Calu3 (cell line): ENCODE measurements at regions of chr14 and their contacts with region 1.

Region 1: GRCh38 chr14:67704484-67705089 is 2.9 kb downstream of the RDH12 start:
- DNase-seq: peak; percentile 62
- H3K4me3 Mint-ChIP-seq: peak overlapping the region; percentile 49
- H3K27ac Mint-ChIP-seq: peak overlapping the region; percentile 78
- H3K4me1 Mint-ChIP-seq: peaks cover 16% of the 10 kb centered on the region
- H3K27me3 Mint-ChIP-seq: no peaks in the 10 kb centered on the region
- CTCF ChIP-seq: peak; percentile 50

Region 2: DNA sequence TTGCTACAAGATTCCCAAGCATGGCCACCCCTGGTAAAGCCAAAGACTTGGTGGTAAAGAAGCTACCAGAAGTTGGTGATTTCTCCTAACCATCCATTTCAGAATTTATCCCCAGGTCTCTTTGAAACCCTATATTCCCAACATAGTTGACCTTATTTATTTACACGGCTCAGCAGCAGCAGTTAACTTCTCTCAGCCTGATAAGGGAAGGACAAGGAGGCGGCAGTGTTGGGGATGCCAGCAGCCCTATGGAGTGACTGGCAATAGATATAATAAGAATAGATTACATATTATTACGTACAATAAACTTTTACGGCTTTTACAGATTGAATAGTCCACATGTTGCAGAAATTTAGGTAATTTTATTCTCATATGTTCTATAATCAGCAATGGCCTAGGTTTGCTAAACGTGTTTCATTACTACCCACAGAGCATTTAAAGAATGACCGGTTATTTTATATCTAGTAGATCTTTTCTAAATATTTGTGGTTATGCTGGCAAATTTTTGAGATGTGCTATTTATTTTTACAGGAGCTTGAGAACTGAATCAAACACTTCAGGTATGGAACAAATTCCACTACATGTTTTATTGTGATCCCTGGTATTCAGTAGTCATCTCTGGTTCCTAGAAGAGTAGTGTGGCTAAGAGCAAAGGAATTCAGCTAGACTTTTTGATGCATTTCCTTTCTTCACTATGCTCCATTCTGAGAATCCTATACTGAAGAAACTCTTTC is 483.2 kb before region 1 on chr14:
- CTCF ChIA-PET with region 1: no interaction called
- intact Hi-C with region 1: no loop called
- DNase-seq: no peak
- H3K4me3 Mint-ChIP-seq: no peak overlapping the region
- H3K27ac Mint-ChIP-seq: no peak overlapping the region
- H3K4me1 Mint-ChIP-seq: peaks cover 12% of the 10 kb centered on the region
- H3K27me3 Mint-ChIP-seq: no peaks in the 10 kb centered on the region
- CTCF ChIP-seq: no peak

Region 3: DNA sequence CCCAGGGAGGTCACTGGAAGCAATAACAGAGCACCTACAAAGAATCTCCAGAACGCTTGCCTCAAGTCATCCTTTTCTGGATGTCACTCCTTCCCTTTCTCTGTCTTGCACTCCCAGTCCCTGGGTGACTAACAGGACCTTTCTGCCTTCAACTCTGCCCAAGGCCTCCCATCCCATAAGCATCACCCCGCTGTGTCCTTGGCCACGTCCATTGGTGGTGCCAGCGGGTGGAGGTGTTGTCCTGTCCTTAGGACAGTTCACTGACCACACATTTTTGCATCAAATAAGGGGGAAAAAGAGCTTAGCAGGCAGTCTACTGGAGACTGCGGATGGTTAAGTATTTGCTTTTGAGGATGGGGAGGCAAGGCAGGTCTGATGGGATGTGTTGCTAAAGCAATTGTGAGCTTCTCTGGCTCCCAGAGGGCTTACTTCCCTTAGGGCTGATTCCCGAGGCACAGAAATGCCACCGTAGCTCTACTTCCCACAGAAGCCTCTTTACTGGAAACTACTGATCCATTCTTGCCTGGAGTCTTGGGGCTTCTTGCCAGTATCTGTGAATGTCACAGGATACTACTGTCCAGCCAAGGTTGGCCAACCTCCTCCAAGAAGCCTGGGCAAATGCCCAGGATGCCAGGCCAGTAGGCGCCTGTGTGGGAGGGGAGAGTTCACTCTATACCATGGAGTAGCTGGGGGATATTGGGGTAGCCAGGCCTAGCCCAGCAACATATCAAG is 268.8 kb before region 1 on chr14:
- CTCF ChIA-PET with region 1: no interaction called
- intact Hi-C with region 1: loop called (anchors 10 kb)
- DNase-seq: no peak
- H3K4me3 Mint-ChIP-seq: no peak overlapping the region
- H3K27ac Mint-ChIP-seq: no peak overlapping the region
- H3K4me1 Mint-ChIP-seq: peaks cover 16% of the 10 kb centered on the region
- H3K27me3 Mint-ChIP-seq: peaks cover 53% of the 10 kb centered on the region
- CTCF ChIP-seq: no peak

Region 4: DNA sequence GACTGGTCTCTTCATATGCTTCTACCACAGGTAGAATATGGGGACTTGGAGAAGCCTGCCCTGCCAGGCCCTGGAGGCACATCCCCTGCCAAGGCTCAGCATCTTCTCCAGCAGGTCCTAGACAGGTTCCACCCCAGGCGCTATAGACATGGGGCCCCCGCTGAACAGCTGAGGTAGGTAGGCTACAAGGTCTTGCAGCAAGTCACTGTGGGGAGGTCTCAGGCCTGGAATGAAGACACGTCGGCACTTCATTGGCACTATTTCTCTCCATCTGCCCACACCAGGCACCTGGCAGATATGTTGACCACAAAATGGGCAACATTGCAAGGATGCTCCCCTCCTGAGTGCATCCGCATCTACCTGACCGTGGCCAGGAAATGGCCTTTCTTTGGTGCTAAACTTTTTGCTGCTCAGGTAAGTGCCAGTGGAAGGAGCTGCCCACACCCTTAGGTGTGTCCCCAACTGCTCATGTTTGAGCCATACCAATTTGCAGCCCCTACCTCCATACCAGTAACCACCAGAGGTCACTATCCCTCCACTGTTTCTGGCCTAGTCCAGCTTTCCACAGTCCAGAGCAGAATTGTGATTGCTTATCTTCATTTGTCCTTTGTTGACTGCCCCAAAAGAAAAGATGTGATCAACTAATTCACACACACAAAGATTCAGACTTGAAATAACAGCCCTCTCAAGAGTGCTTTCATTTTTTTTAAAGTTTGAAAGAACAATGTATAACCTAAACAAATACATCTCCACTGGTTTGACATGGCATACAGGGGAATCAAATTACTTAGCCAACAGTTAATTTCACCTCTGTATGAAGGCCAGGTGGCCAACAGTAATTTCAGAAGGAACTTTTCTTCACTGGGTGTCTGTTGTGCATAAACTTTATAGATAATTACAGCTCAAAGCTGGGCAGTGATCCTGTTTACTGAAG is 120.6 kb before region 1 on chr14:
- CTCF ChIA-PET with region 1: interaction called, 31 read pairs
- intact Hi-C with region 1: loop called (anchors 1 kb)
- DNase-seq: peak; percentile 70
- H3K4me3 Mint-ChIP-seq: no peak overlapping the region
- H3K27ac Mint-ChIP-seq: no peak overlapping the region
- H3K4me1 Mint-ChIP-seq: no peaks in the 10 kb centered on the region
- H3K27me3 Mint-ChIP-seq: no peaks in the 10 kb centered on the region
- CTCF ChIP-seq: peak; percentile 45

Region 5: DNA sequence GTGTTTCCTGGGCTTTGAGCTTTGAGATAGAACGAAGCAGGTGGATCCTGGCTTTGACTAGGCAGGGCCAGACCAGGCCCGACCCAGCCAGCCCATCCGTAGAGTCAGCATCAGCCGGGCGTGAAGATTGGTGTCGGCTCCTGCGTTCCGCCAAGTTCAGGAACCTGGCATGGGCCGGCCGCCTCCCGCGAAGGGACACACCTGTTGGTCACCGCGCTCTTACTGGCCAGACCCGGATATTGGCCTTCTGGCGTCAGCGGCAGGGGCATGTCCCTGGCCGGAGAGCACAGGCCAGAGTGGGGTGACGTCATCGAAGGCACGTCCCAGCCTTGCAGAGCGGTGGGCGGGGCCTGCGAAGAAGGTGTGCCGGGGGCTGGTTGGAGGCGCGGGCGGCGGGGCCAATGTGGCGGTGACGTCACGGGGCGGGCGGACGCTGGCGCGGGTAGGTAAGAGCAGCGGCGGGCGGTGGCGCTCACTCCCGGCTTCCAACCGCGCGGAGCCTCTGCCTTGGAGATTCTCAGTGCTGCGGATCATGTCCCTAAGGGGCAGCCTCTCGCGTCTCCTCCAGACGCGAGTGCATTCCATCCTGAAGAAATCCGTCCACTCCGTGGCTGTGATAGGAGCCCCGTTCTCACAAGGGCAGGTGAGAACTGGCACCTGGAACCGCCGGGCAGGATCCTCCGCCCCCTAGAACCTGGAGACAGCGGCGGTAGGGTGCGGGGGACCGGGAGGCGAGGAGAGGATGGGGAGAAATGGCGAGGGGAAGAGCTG is 85.0 kb before region 1 on chr14 and contains the start of gene ARG2:
- CTCF ChIA-PET with region 1: interaction called, 23 read pairs
- intact Hi-C with region 1: loop called (anchors 2 kb)
- DNase-seq: peak; percentile 99
- H3K4me3 Mint-ChIP-seq: peak within 1 kb of the TSS; percentile 97
- H3K27ac Mint-ChIP-seq: peak within 1 kb of the TSS; percentile 94
- H3K4me1 Mint-ChIP-seq: peaks cover 21% of the 10 kb centered on the region
- H3K27me3 Mint-ChIP-seq: peaks cover 18% of the 10 kb centered on the region
- CTCF ChIP-seq: no peak
- total RNA-seq, gene ARG2: 11.2 and 18.4 TPM in 2 replicates

Region 6: DNA sequence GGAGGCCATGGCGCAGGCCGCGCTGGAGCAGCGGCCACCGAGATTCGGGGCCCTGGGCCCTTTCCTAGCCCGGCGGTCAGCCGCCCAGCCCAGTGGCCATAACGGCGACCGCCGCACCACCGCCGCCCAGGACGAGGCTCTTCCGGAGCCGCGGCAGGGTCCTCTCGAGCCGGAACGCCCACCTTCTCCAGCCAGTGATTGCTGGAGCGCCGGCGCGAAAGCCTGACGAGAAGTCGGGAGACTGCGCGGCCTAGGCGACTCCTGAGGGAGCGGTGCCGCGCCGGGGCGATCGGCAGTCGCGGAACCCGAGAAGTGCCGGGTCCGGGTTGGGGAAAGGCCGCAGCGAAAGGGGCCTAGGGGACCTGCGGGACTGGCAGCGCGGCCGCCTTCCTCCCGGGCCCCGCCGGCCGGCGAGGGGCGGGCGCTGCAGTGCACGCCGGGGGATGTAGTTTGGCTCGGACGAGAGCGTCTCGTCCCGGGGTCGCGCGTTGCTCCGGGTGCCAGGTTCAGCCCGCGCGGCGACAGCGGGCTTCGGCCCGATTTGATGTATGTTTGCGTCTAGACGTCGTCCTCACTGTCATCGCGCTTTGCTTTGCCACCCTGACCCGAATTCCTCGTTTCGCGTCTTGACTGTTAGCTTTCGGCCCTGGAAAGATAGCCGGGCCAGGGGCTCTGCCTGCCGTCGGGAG is 30.0 kb before region 1 on chr14 and contains the start of gene VTI1B:
- CTCF ChIA-PET with region 1: interaction called, 18 read pairs
- intact Hi-C with region 1: loop called (anchors 5 kb)
- DNase-seq: peak; percentile 78
- H3K4me3 Mint-ChIP-seq: peak within 1 kb of the TSS; percentile 88
- H3K27ac Mint-ChIP-seq: peak within 1 kb of the TSS; percentile 83
- H3K4me1 Mint-ChIP-seq: peaks cover 28% of the 10 kb centered on the region
- H3K27me3 Mint-ChIP-seq: no peaks in the 10 kb centered on the region
- CTCF ChIP-seq: no peak
- total RNA-seq, gene VTI1B: 70.3 and 75.5 TPM in 2 replicates

Region 7: DNA sequence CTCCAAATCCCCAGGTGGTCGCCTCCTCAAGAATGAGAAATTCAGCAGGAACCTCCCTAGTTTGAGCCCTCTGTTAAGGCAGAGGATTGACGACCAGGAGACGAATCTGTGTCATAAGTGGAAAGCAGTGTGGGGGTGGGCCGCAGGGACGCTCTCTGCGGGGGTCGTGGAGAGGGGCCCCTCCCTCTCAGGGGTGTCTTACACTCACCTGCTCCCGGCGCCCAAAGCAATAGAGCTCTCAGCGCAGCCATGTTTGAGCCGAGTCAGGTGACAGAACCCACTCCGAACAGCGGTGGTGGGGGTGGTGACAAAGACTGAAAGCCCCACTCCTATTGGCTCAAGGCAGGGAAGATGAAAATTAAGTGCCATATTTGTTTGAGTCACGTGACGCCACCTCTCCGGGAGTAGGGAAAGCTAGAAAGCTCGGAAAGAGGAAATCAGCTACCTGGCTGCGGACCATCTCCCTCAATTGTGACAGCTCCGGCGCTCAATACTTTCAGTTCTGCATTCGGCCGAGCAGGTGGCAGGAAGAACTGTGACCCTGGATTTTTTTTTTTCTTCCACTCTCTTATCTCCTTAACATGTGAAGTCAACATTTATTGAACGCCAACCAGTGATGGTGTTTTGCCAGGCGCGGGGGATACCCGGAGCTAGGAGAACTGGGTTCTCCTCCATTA is 111.9 kb after region 1 on chr14 and contains the start of gene ZFYVE26:
- CTCF ChIA-PET with region 1: no interaction called
- intact Hi-C with region 1: no loop called
- DNase-seq: peak; percentile 92
- H3K4me3 Mint-ChIP-seq: peak within 1 kb of the TSS; percentile 86
- H3K27ac Mint-ChIP-seq: peak within 1 kb of the TSS; percentile 93
- H3K4me1 Mint-ChIP-seq: peaks cover 21% of the 10 kb centered on the region
- H3K27me3 Mint-ChIP-seq: no peaks in the 10 kb centered on the region
- CTCF ChIP-seq: no peak
- total RNA-seq, gene ZFYVE26: 19.9 and 22.5 TPM in 2 replicates